ENCODE measurements at regions of chr12 and their contacts with region 1.

Region 1: DNA sequence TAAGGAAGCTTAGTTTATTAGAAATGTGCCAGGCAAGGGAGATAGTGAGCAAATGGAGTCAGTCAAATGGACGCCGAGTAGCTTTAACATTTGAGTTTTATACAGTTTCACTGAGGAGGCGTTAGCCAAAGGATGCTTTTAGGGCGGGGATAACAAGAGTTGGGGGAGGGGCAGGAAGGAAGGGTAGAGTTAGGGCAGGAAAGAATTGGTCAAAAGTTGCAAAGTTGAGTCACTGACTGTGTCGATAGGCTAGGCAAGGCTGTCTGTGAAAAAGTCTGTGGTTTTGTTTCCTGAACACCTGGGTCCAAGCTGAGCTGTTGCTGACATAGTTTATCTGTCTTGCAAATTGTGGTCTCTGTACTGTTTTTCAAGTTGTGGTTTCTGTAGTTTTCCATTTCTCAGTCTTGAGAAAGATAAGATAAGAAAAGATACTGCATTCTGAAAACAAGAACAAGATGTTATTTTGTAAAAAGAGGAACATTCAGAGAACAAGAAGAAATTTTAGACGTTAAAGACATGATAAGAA is 62.6 kb upstream of the RESF1 start:
- DNase-seq: peak; percentile 70 to 98 (median 85)
- ATAC-seq: peak; percentile 93
- H3K4me3 ChIP-seq: no peak overlapping the region
- H3K4me3 Mint-ChIP-seq: peak overlapping the region; percentile 56
- H3K27ac ChIP-seq: peak overlapping the region; percentile 64 to 79
- H3K27ac Mint-ChIP-seq: peak overlapping the region; percentile 96
- H3K4me1 ChIP-seq: peaks cover 70% of the 10 kb centered on the region
- H3K4me1 Mint-ChIP-seq: peaks cover 52% of the 10 kb centered on the region
- H3K27me3 ChIP-seq: no peaks in the 10 kb centered on the region
- H3K27me3 Mint-ChIP-seq: no peaks in the 10 kb centered on the region
- CTCF ChIP-seq: no peak

Region 2: GRCh38 chr12:31790759-31791158 is 105.8 kb before region 1 on chr12:
- CTCF ChIA-PET with region 1: interaction called, 3 read pairs
- POLR2A ChIA-PET with region 1: interaction called, 11 read pairs
- intact Hi-C with region 1: no loop called
- DNase-seq: peak in 1 of 9 experiments; percentile 35
- ATAC-seq: peak; percentile 31
- H3K4me3 ChIP-seq: no peak overlapping the region
- H3K4me3 Mint-ChIP-seq: peak overlapping the region; percentile 24
- H3K27ac ChIP-seq: peak overlapping the region in 1 of 2 experiments; percentile 33
- H3K27ac Mint-ChIP-seq: peak overlapping the region; percentile 82
- H3K4me1 ChIP-seq: peaks cover 24% of the 10 kb centered on the region
- H3K4me1 Mint-ChIP-seq: peaks cover 38% of the 10 kb centered on the region
- H3K27me3 ChIP-seq: no peaks in the 10 kb centered on the region
- H3K27me3 Mint-ChIP-seq: no peaks in the 10 kb centered on the region
- CTCF ChIP-seq: no peak

Region 3: GRCh38 chr12:31819427-31819826 is 77.2 kb before region 1 on chr12:
- CTCF ChIA-PET with region 1: no interaction called
- POLR2A ChIA-PET with region 1: no interaction called
- intact Hi-C with region 1: no loop called
- DNase-seq: no peak
- ATAC-seq: no peak
- H3K4me3 ChIP-seq: no peak overlapping the region
- H3K4me3 Mint-ChIP-seq: no peak overlapping the region
- H3K27ac ChIP-seq: no peak overlapping the region
- H3K27ac Mint-ChIP-seq: no peak overlapping the region
- H3K4me1 ChIP-seq: peaks cover 10% of the 10 kb centered on the region
- H3K4me1 Mint-ChIP-seq: peaks cover 25% of the 10 kb centered on the region
- H3K27me3 ChIP-seq: no peaks in the 10 kb centered on the region
- H3K27me3 Mint-ChIP-seq: no peaks in the 10 kb centered on the region
- CTCF ChIP-seq: no peak

Region 4: DNA sequence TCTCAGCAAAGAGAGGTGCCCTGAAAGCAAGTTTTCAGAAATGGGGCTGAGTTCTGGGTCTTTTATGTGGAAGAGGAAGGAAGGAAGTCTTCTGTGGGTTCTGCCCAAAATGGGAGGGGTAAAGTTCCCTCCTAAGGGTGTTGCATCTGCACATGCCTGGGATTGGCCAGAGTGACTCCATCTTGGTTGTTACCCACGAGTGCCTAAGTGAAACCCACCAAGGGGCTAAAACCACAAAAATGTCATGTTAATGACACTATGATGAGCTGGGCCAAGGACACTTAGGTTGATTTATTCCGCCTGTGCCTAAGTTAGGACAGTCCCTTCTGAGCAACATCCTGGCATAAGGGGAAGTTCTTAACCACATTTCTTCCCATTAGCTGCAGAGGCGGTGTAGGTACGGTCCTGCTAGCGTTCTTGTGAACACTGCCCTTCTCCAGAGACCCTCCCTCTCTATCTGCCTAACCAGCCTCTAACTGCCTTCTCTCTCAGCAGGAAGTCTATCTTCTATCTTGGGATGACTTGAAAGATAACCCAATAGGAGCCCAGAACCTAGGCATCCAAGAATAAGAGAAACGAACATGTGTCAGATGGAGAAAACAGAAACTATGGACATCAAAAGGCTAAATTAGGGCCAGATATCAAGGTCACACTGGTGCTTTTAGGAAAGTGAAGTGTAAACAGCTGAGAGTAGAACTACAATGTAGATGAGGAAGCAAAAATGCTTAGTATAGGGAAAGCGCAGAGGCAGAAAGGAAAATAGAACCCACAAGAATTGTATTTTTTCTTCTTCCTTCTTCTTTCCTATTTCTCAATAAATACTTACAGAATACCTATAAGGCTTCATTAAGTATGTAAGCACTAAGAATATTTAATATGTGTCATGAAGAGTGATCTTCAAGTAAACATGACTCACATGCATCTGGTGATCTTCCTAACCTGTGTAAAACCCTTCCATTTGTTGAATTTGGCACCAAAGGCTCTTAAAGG is 63.5 kb before region 1 on chr12:
- CTCF ChIA-PET with region 1: interaction called, 4 read pairs
- POLR2A ChIA-PET with region 1: no interaction called
- intact Hi-C with region 1: loop called in 1 of 2 experiments (anchors 5 kb)
- DNase-seq: peak; percentile 3 to 79 (median 26)
- ATAC-seq: peak; percentile 72
- H3K4me3 ChIP-seq: peak overlapping the region in 1 of 2 experiments; percentile 1
- H3K4me3 Mint-ChIP-seq: peak overlapping the region; percentile 26
- H3K27ac ChIP-seq: peak overlapping the region in 1 of 2 experiments; percentile 72
- H3K27ac Mint-ChIP-seq: peak overlapping the region; percentile 84
- H3K4me1 ChIP-seq: peaks cover 30% of the 10 kb centered on the region
- H3K4me1 Mint-ChIP-seq: peaks cover 54% of the 10 kb centered on the region
- H3K27me3 ChIP-seq: no peaks in the 10 kb centered on the region
- H3K27me3 Mint-ChIP-seq: no peaks in the 10 kb centered on the region
- CTCF ChIP-seq: no peak

Region 5: DNA sequence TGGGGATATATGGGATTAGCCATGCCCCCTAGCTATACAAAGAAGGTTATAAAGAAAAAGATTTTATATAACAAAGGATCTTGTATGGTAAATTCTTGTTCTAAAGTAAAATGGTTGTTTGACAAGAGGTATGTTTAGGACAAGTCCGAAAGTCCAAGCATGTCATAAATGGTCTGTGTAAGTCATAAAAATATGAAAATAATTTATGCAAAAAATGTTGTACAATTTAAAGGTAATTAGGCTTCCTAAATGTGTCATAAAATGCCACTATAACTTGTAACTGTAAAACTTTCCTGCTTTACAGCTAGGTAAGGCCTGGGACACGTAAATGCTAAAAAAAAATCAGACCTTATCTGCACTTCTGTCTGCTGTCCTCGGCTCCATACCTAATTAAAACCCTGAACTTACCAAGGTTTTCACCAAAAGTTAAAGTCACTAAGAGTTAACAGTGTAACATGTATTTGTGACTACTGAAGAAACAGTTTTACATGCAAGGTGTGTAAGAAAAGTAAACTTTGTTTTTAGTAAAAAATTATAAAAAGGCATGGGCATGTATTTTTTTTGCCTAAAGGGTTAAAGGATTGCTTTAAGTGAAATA is 47.4 kb before region 1 on chr12:
- CTCF ChIA-PET with region 1: no interaction called
- POLR2A ChIA-PET with region 1: no interaction called
- intact Hi-C with region 1: no loop called
- DNase-seq: no peak
- ATAC-seq: no peak
- H3K4me3 ChIP-seq: no peak overlapping the region
- H3K4me3 Mint-ChIP-seq: no peak overlapping the region
- H3K27ac ChIP-seq: no peak overlapping the region
- H3K27ac Mint-ChIP-seq: no peak overlapping the region
- H3K4me1 ChIP-seq: no peaks in the 10 kb centered on the region
- H3K4me1 Mint-ChIP-seq: peaks cover 9% of the 10 kb centered on the region
- H3K27me3 ChIP-seq: no peaks in the 10 kb centered on the region
- H3K27me3 Mint-ChIP-seq: no peaks in the 10 kb centered on the region
- CTCF ChIP-seq: no peak

Region 6: GRCh38 chr12:31874961-31875608 is 21.5 kb before region 1 on chr12:
- CTCF ChIA-PET with region 1: interaction called, 4 read pairs
- POLR2A ChIA-PET with region 1: interaction called, 4 read pairs
- intact Hi-C with region 1: loop called in 1 of 2 experiments (anchors 2 kb)
- DNase-seq: peak; percentile 47 to 94 (median 73)
- ATAC-seq: peak; percentile 93
- H3K4me3 ChIP-seq: peak overlapping the region in 1 of 2 experiments; percentile 6
- H3K4me3 Mint-ChIP-seq: peak overlapping the region; percentile 63
- H3K27ac ChIP-seq: peak overlapping the region; percentile 66 to 92
- H3K27ac Mint-ChIP-seq: peak overlapping the region; percentile 98
- H3K4me1 ChIP-seq: peaks cover 18% of the 10 kb centered on the region
- H3K4me1 Mint-ChIP-seq: peaks cover 55% of the 10 kb centered on the region
- H3K27me3 ChIP-seq: no peaks in the 10 kb centered on the region
- H3K27me3 Mint-ChIP-seq: no peaks in the 10 kb centered on the region
- CTCF ChIP-seq: no peak

Region 7: DNA sequence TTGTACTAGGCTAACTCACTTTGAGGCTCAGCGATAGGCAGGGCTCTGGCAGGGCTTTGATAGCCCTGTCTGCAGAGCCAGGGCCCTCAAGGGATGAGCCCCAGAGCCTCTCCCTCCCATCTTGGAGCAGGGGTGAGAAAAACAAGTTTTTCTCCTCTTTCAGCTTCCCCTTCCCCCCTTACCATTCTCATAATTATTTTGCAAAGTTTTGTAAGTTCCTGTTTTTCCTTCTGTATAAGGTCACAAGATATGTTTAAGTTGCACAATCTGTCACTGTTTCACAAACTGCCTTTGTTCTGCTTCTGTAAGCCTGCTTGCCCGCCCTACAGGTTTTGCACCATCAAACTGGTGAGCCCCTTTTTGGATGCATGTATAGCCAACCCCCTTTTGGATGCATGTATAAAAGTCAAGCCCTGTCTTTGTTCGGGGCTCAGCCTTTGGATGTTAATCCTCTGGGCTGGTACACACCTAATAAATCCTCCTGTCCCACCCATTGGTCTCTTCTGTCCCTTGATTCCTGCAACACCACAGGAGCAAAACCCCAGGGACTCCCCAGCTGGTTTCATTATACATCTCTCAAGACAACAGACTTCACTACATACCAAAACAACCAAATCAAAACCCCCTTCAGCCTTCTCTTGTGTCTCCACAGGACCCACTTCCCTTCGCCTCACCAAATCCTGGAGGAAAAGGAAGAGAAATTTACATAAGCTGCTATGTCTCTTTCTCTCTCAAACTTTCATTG is 10.2 kb after region 1 on chr12:
- CTCF ChIA-PET with region 1: no interaction called
- POLR2A ChIA-PET with region 1: no interaction called
- intact Hi-C with region 1: no loop called
- DNase-seq: no peak
- ATAC-seq: no peak
- H3K4me3 ChIP-seq: no peak overlapping the region
- H3K4me3 Mint-ChIP-seq: no peak overlapping the region
- H3K27ac ChIP-seq: no peak overlapping the region
- H3K27ac Mint-ChIP-seq: peak overlapping the region; percentile 64
- H3K4me1 ChIP-seq: no peaks in the 10 kb centered on the region
- H3K4me1 Mint-ChIP-seq: peaks cover 11% of the 10 kb centered on the region
- H3K27me3 ChIP-seq: no peaks in the 10 kb centered on the region
- H3K27me3 Mint-ChIP-seq: no peaks in the 10 kb centered on the region
- CTCF ChIP-seq: no peak

Region 8: GRCh38 chr12:32076941-32077340 is 180.4 kb after region 1 on chr12:
- CTCF ChIA-PET with region 1: no interaction called
- POLR2A ChIA-PET with region 1: no interaction called
- intact Hi-C with region 1: no loop called
- DNase-seq: no peak
- ATAC-seq: no peak
- H3K4me3 ChIP-seq: no peak overlapping the region
- H3K4me3 Mint-ChIP-seq: no peak overlapping the region
- H3K27ac ChIP-seq: no peak overlapping the region
- H3K27ac Mint-ChIP-seq: no peak overlapping the region
- H3K4me1 ChIP-seq: no peaks in the 10 kb centered on the region
- H3K4me1 Mint-ChIP-seq: no peaks in the 10 kb centered on the region
- H3K27me3 ChIP-seq: no peaks in the 10 kb centered on the region
- H3K27me3 Mint-ChIP-seq: no peaks in the 10 kb centered on the region
- CTCF ChIP-seq: no peak

Measured in CD8-positive, alpha-beta T cell (primary cell).